PC-3 (cell line): ENCODE measurements at regions of chr2 and their contacts with region 1.

Region 1: GRCh38 chr2:150586858-150587257 is 99.4 kb upstream of the RND3 start:
- DNase-seq: peak; percentile 92
- ATAC-seq: peak; percentile 81
- H3K4me3 ChIP-seq: no peak overlapping the region
- H3K27ac ChIP-seq: peak overlapping the region; percentile 45; the same call in 1 of the 2 replicates
- H3K4me1 ChIP-seq: peaks cover 28% of the 10 kb centered on the region
- H3K27me3 ChIP-seq: no peaks in the 10 kb centered on the region
- CTCF ChIP-seq: no peak

Region 2: GRCh38 chr2:150320608-150321007 is 266.2 kb before region 1 on chr2:
- CTCF ChIA-PET with region 1: no interaction called
- POLR2A ChIA-PET with region 1: no interaction called
- intact Hi-C with region 1: no loop called
- DNase-seq: no peak
- ATAC-seq: no peak
- H3K4me3 ChIP-seq: no peak overlapping the region
- H3K27ac ChIP-seq: no peak overlapping the region
- H3K4me1 ChIP-seq: no peaks in the 10 kb centered on the region
- H3K27me3 ChIP-seq: no peaks in the 10 kb centered on the region
- CTCF ChIP-seq: no peak

Region 3: DNA sequence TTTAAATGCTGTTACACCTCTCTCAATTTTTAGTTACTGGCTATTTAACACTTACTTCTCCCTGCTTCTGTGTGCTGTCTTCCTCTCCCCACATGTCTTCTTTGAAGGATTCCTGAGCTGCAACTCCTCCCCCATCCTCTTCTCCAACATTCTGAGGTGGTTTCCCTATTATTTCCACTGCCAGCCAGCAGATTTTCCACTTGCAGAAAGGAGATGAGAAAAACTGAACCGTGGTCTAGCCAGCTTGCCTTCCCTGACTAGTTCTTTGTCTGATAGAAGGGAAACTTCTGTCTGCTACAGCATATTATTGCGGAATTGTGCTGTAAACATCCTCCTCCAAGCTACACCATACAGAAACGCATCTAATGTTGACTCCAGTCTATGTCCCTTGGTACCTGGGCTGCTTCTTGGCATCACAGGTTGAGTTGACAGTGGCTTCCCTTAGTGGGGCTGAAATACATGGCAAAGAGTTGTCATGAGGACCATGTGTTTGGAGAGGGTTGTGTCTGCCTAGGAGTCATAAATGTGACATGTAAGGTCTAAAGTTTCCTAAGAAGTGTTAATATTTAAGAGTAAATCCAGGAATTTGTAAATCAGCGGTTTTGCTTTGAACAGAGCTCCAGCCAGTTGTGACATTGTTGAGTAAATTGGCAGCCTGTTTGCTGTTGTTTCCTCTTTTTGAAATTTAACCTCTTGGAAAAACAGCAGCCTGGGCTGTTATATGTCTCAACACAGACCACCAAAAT is 31.1 kb before region 1 on chr2:
- CTCF ChIA-PET with region 1: no interaction called
- POLR2A ChIA-PET with region 1: interaction called, 17 read pairs
- intact Hi-C with region 1: no loop called
- DNase-seq: no peak
- ATAC-seq: no peak
- H3K4me3 ChIP-seq: no peak overlapping the region
- H3K27ac ChIP-seq: no peak overlapping the region
- H3K4me1 ChIP-seq: no peaks in the 10 kb centered on the region
- H3K27me3 ChIP-seq: no peaks in the 10 kb centered on the region
- CTCF ChIP-seq: no peak

Region 4: DNA sequence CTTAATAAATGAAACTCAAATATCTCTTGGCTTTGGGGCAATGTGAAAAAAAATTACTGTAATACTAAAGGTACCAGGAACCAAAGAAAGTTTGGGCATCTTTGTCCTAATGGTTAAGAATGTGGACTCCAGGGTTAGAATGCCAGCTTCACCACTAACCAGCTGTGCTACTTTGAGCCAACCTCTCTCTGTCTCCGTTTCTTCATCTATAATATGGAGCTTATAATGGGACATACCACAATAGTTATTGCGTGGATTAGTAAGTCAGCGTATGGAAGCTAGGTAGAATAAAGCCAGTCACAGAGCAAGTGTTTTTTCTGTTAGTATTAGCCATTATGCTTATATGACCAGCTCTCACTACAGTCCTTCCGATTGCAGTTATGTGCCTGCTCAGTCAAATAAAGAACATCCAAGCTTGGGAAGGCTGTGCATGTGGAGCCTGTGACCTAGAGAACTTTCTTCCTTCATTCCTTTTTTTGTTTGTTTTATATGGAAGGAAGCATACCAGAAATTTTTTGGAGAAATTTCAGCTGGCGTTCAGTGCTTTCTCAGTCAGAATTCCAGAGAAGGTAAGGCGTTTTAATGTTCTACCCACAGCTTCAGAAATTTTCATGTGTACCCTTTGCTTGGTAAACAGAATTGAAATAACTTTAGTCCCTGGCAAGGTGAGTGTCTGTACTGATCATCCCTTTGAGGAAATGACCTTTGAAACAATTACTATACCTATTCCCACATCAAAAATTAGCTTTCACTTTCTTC is 14.6 kb after region 1 on chr2:
- CTCF ChIA-PET with region 1: no interaction called
- POLR2A ChIA-PET with region 1: interaction called, 11 read pairs
- intact Hi-C with region 1: loop called (anchors 1 kb)
- DNase-seq: peak; percentile 72
- ATAC-seq: peak; percentile 90
- H3K4me3 ChIP-seq: peak overlapping the region; percentile 43
- H3K27ac ChIP-seq: peak overlapping the region; percentile 20
- H3K4me1 ChIP-seq: peaks cover 18% of the 10 kb centered on the region
- H3K27me3 ChIP-seq: no peaks in the 10 kb centered on the region
- CTCF ChIP-seq: no peak